ENCODE measurements at regions of chr3 and their contacts with region 1.

Region 1: GRCh38 chr3:107235928-107236315 is 141.3 kb upstream of the CCDC54 start:
- DNase-seq: peak; percentile 90
- H3K4me3 Mint-ChIP-seq: peak overlapping the region; percentile 71
- H3K27ac Mint-ChIP-seq: peak overlapping the region; percentile 84
- H3K4me1 Mint-ChIP-seq: peaks cover 31% of the 10 kb centered on the region
- H3K27me3 Mint-ChIP-seq: no peaks in the 10 kb centered on the region
- CTCF ChIP-seq: peak; percentile 83

Region 2: GRCh38 chr3:107216711-107217110 is 19.2 kb before region 1 on chr3:
- CTCF ChIA-PET with region 1: interaction called, 37 read pairs
- POLR2A ChIA-PET with region 1: interaction called, 68 read pairs
- intact Hi-C with region 1: no loop called
- DNase-seq: peak; percentile 95
- H3K4me3 Mint-ChIP-seq: peak overlapping the region; percentile 28
- H3K27ac Mint-ChIP-seq: peak overlapping the region; percentile 90
- H3K4me1 Mint-ChIP-seq: peaks cover 35% of the 10 kb centered on the region
- H3K27me3 Mint-ChIP-seq: no peaks in the 10 kb centered on the region
- CTCF ChIP-seq: no peak

Region 3: DNA sequence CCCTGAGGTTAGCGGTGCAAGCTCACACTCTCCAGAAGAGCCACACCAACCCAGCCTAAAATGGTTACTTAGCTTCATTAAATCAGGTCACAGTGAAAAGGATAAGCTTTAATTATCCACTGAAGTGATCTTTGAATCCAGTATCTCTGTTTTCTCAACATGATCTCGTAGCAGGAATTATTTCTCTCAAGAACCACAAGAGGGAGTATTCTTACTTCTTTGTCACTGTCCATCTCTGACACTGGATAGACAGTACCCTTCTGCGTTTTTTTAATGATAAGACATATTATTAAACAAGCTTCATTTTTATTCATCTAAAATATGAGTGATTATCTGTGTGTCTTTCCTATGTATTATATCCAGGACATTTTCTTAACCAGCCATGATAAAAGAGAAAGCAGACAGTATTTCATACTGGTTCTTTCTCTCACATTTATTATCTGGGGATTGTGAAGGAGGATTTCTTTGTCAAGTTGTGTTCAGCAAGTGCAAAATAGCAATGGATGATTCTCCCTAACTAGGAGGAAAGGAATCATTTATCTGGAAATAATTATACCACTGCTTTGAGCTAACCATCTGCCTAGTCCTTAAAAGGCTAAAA is 36.0 kb after region 1 on chr3:
- CTCF ChIA-PET with region 1: interaction called, 62 read pairs
- POLR2A ChIA-PET with region 1: interaction called, 23 read pairs
- intact Hi-C with region 1: loop called (anchors 2 kb)
- DNase-seq: peak; percentile 56
- H3K4me3 Mint-ChIP-seq: no peak overlapping the region
- H3K27ac Mint-ChIP-seq: peak overlapping the region; percentile 54
- H3K4me1 Mint-ChIP-seq: peaks cover 10% of the 10 kb centered on the region
- H3K27me3 Mint-ChIP-seq: no peaks in the 10 kb centered on the region
- CTCF ChIP-seq: peak; percentile 54

Region 4: DNA sequence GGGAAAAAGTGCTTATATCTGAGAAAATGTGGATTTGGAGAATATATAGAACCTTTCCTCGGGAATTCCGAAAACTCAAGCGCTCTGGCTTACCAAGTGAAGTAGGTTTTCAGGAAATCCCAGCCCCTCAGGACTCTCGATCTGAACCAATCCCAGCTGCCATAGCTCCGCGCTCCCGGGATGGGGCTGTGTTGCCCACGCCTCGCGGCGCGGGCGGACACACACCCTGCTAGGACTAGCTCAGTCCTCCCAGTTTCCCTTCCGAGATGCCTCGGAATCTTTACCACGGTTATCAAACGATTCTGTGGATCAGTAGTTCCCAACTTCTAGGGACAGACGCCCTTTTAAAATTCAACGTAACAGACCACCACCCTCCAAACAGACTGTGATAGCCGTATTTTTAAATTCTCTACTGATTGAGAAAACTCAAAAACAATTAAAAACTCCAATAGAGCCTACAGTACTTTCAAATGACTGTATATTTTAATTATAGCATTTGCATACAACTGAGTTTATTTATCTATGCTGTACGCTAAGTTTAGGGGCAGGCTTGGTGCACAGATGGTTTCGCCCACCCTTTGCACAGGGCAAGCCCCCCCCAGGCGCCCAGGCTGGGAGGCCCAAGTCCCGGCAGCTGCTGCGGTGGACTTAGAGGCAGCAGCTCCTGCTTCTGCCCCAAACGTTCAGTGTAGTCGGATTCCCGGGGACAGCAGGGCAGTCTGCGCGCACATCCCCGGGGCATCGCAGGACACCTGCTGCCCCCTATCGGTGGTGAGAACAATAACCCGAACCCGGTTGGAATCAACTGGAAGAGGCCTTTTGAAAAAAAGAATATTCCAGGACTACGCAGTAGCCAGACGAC is 193.6 kb after region 1 on chr3:
- CTCF ChIA-PET with region 1: interaction called, 8 read pairs
- POLR2A ChIA-PET with region 1: interaction called, 25 read pairs
- intact Hi-C with region 1: loop called (anchors 1 kb)
- DNase-seq: peak; percentile 82
- H3K4me3 Mint-ChIP-seq: peak overlapping the region; percentile 79
- H3K27ac Mint-ChIP-seq: no peak overlapping the region
- H3K4me1 Mint-ChIP-seq: peaks cover 7% of the 10 kb centered on the region
- H3K27me3 Mint-ChIP-seq: no peaks in the 10 kb centered on the region
- CTCF ChIP-seq: peak; percentile 79

Region 5: DNA sequence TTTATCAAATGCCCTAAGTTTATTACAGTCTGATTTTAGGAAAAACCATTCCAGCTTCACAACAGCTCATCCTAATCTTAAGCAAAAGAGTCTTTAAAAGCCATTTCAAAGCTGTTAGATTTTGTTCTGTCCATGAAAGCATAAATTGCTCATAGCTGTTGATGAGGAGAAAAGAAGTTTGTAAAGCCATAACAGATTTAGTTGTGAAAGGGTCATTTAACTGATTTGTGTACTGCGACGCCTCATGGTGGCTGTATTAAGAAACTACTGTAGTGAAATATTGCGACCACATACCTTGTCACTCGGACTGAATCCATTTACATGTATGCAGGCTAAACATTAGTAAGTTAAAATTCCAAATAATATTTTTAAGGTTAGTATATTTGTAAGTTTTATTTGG is 307.7 kb after region 1 on chr3:
- CTCF ChIA-PET with region 1: no interaction called
- POLR2A ChIA-PET with region 1: no interaction called
- intact Hi-C with region 1: no loop called
- DNase-seq: peak; percentile 30
- H3K4me3 Mint-ChIP-seq: no peak overlapping the region
- H3K27ac Mint-ChIP-seq: no peak overlapping the region
- H3K4me1 Mint-ChIP-seq: peaks cover 9% of the 10 kb centered on the region
- H3K27me3 Mint-ChIP-seq: no peaks in the 10 kb centered on the region
- CTCF ChIP-seq: peak; percentile 29

Region 6: GRCh38 chr3:107604057-107604822 is 368.3 kb after region 1 on chr3:
- CTCF ChIA-PET with region 1: no interaction called
- POLR2A ChIA-PET with region 1: no interaction called
- intact Hi-C with region 1: no loop called
- DNase-seq: peak; percentile 39
- H3K4me3 Mint-ChIP-seq: no peak overlapping the region
- H3K27ac Mint-ChIP-seq: peak overlapping the region; percentile 65
- H3K4me1 Mint-ChIP-seq: peaks cover 15% of the 10 kb centered on the region
- H3K27me3 Mint-ChIP-seq: no peaks in the 10 kb centered on the region
- CTCF ChIP-seq: no peak

Region 7: GRCh38 chr3:107740992-107741896 is 505.3 kb after region 1 on chr3:
- CTCF ChIA-PET with region 1: interaction called, 18 read pairs
- POLR2A ChIA-PET with region 1: interaction called, 3 read pairs
- intact Hi-C with region 1: loop called (anchors 2 kb)
- DNase-seq: peak; percentile 32
- H3K4me3 Mint-ChIP-seq: no peak overlapping the region
- H3K27ac Mint-ChIP-seq: no peak overlapping the region
- H3K4me1 Mint-ChIP-seq: no peaks in the 10 kb centered on the region
- H3K27me3 Mint-ChIP-seq: no peaks in the 10 kb centered on the region
- CTCF ChIP-seq: peak; percentile 38

Measured in MCF 10A (cell line).